ENCODE measurements at regions of chr12 and their contacts with region 1.

Region 1: DNA sequence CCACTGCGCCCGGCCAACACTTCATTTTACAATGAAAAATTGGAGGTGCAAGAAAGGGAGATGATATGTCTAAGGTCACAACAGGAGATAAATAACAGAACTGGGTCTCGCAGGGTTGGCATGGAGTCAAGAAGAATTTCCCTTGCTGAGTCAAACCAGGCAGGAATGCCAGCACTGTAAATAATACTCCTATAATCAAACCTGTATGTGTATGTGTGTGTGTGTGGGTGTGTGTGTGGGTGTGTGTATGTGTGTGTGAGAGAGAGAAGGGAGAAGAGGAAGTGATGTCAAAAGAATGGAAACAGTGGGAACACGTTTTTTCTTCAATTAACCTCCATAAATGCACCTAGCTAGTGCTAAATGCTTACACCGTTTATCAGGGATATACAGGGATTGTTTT is 70.4 kb downstream of the TMEM116 start:
- DNase-seq: no peak
- ATAC-seq: no peak
- H3K4me3 ChIP-seq: no peak overlapping the region
- H3K27ac ChIP-seq: no peak overlapping the region
- H3K4me1 ChIP-seq: peaks cover 22% of the 10 kb centered on the region
- H3K27me3 ChIP-seq: no peaks in the 10 kb centered on the region
- CTCF ChIP-seq: no peak
- EP300 ChIP-seq: no peak
- POLR2A ChIP-seq: no peak
- RAD21 ChIP-seq: no peak

Region 2: DNA sequence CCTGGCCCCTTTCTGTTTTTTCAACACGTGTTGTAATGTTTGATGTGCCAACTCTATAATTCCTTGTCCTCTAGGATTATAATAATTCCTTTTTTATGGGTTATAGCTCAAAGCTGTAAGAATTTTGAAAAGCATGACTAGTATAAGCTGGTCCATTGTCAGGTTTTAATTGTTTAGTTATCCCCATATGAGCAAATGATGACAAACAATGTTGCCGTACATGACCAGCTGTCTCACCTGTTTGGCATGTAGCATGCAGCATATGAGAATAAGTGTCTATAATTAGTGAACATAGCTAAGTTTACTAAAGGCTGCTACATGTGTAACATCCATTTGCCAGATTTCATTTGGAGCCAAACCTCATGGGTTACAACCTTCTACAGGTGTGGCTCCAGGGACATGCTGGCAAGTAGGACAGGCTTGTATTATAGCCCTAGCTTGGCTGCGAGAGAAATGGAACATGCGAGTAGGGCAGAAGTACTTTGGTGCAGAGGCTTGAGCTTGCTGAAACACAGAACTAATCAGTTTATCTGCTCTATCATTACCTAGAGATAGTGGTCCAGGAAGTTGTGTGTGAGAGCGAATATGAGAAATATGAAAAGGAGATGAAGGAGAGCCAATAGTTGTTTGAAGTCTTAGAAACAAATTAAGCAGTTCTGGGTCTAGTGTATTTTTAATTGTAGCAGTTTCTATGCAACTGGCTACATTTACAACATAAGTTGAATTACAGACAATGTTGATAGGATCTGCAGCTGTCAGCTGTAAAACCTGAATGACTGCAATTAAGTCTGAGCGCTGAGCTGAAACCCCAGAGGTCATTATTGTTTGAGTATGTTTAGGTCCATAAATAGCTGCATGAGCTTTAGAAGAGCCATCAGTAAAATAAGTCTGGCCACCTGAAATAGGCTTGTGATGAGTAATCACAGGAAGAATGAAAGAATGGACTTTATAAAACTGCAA is 123.1 kb before region 1 on chr12:
- CTCF ChIA-PET with region 1: no interaction called
- POLR2A ChIA-PET with region 1: no interaction called
- in situ Hi-C with region 1: no loop called
- intact Hi-C with region 1: loop called (anchors 5 kb)
- DNase-seq: no peak
- ATAC-seq: no peak
- H3K4me3 ChIP-seq: no peak overlapping the region
- H3K27ac ChIP-seq: no peak overlapping the region
- H3K4me1 ChIP-seq: peaks cover 17% of the 10 kb centered on the region
- H3K27me3 ChIP-seq: no peaks in the 10 kb centered on the region
- CTCF ChIP-seq: no peak
- EP300 ChIP-seq: no peak
- POLR2A ChIP-seq: no peak
- RAD21 ChIP-seq: no peak